Activated CD4-positive, alpha-beta T cell treated with anti-CD3 and anti-CD28 coated beads for 36 hours (primary cell): ENCODE measurements at regions of chr7 and their contacts with region 1.

Region 1: GRCh38 chr7:85030893-85031292 is 156.0 kb downstream of the SEMA3D start:
- DNase-seq: no peak
- ATAC-seq: no peak
- H3K4me3 Mint-ChIP-seq: no peak overlapping the region
- H3K27ac Mint-ChIP-seq: no peak overlapping the region
- H3K4me1 Mint-ChIP-seq: no peaks in the 10 kb centered on the region
- H3K27me3 Mint-ChIP-seq: peaks cover 6% of the 10 kb centered on the region

Region 2: GRCh38 chr7:84801396-84801795 is 229.5 kb before region 1 on chr7:
- CTCF ChIA-PET with region 1: no interaction called
- POLR2A ChIA-PET with region 1: no interaction called
- intact Hi-C with region 1: no loop called
- DNase-seq: no peak
- ATAC-seq: no peak
- H3K4me3 Mint-ChIP-seq: no peak overlapping the region
- H3K27ac Mint-ChIP-seq: no peak overlapping the region
- H3K4me1 Mint-ChIP-seq: no peaks in the 10 kb centered on the region
- H3K27me3 Mint-ChIP-seq: no peaks in the 10 kb centered on the region

Region 3: GRCh38 chr7:85464042-85464651 is 433.3 kb after region 1 on chr7:
- CTCF ChIA-PET with region 1: no interaction called
- POLR2A ChIA-PET with region 1: no interaction called
- intact Hi-C with region 1: loop called in 1 of 2 experiments (anchors 10 kb)
- DNase-seq: no peak
- ATAC-seq: no peak
- H3K4me3 Mint-ChIP-seq: no peak overlapping the region
- H3K27ac Mint-ChIP-seq: no peak overlapping the region
- H3K4me1 Mint-ChIP-seq: no peaks in the 10 kb centered on the region
- H3K27me3 Mint-ChIP-seq: no peaks in the 10 kb centered on the region

Region 4: DNA sequence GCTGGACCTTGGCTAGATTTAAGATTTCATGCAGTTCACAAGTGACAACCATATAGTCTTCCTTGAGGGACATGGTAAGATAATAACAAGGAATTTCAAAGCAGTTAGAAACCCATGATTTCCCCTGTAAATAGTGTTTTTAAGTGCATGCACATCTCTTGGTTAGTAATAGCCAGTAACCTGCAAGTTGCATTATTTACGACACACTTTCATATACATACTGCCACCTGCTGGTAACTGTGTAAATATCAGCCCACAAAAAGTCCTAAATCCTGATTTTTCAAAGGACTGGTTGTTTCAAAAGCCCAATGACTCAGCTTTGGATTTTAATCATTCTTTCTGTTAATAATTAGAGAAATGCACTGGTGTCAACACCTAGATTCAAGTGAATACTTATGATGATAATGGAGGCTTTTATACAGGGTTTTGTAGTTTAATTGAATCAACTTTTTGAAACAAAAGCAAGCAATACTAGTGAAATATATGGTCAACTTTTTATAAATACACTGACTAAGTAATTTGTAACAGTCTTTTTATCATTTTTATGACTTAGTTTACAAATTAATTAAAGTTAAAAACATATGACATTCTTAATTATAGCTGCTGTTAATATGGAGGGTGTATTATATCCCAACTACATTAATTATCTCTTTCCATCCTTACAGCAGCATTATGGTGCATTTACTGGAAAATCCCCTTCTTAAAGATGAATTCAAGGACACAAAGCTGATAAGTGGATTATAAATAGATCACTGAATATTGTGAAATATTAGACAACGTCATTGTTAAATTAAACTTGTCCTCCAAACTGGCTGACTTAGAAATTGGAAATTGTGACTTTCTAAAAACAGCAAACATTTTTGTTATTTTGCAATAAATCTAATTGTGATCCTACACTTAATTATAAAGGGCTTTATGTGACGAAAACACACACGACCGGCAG is 523.6 kb after region 1 on chr7:
- CTCF ChIA-PET with region 1: interaction called, 5 read pairs
- POLR2A ChIA-PET with region 1: no interaction called
- intact Hi-C with region 1: loop called in 1 of 2 experiments (anchors 1 kb)
- DNase-seq: peak; percentile 5
- ATAC-seq: no peak
- H3K4me3 Mint-ChIP-seq: no peak overlapping the region
- H3K27ac Mint-ChIP-seq: no peak overlapping the region
- H3K4me1 Mint-ChIP-seq: no peaks in the 10 kb centered on the region
- H3K27me3 Mint-ChIP-seq: no peaks in the 10 kb centered on the region

Region 5: DNA sequence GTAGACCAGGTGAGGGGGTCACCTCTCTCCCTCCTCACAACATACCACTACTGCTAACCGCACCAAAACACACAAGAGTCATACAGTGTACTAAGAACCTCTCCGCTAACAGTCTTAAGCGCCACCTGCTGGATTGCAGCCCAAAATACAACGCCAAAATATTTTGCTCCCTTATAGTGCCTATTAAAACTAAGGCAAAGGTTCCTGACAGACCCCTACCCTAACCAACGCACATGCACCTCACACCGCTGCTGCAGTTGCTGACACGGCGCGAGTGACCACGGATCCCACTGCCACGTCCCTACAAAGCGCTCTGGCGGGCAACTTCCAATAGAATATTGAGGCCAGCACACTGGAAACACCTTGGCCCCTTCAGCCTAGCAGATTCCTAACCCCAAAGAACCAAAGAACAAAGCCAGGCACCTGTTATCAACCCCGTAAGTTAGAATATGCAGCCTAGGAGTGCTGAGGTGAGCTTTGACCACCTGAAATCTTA is 719.6 kb after region 1 on chr7:
- CTCF ChIA-PET with region 1: no interaction called
- POLR2A ChIA-PET with region 1: no interaction called
- intact Hi-C with region 1: loop called in 1 of 2 experiments (anchors 2 kb)
- DNase-seq: peak; percentile 50
- ATAC-seq: peak; percentile 55
- H3K4me3 Mint-ChIP-seq: no peak overlapping the region
- H3K27ac Mint-ChIP-seq: no peak overlapping the region
- H3K4me1 Mint-ChIP-seq: no peaks in the 10 kb centered on the region
- H3K27me3 Mint-ChIP-seq: no peaks in the 10 kb centered on the region

Region 6: DNA sequence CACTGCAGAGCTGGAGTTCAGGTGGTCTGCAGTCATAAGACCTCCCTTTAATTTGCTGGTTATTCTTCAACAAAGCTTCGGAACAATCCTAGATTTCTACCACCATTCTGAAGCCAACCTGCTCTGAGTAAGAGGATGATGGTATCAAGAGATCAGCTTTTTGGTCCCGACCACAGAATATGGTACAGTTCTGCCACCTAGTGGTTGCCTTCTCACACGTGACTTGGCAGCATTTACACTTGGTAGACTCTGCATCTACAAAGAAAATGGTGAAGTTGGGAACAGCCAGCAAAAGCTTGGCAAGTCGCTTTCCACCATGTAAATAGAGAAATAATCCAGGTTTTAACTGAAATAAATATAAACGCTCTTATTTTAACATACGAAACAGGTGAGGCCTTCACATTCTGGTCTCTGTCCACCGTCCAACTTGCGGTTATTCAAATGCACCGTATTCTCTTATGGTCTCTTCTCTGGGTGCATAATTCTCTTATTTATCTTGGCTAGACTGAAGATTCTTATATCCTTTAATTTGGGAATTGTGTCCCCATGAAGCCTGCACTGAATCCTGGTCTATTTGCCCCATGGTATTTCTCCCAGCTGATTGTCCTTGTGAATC is 1438.9 kb after region 1 on chr7:
- CTCF ChIA-PET with region 1: no interaction called
- POLR2A ChIA-PET with region 1: no interaction called
- intact Hi-C with region 1: loop called in 1 of 2 experiments (anchors 1 kb)
- DNase-seq: peak; percentile 73
- ATAC-seq: peak; percentile 70
- H3K4me3 Mint-ChIP-seq: no peak overlapping the region
- H3K27ac Mint-ChIP-seq: no peak overlapping the region
- H3K4me1 Mint-ChIP-seq: no peaks in the 10 kb centered on the region
- H3K27me3 Mint-ChIP-seq: no peaks in the 10 kb centered on the region